Spleen (tissue), 13 donors: ENCODE measurements at regions of chr15 and their contacts with region 1.

Region 1: GRCh38 chr15:43285609-43286037 is 18.9 kb upstream of the TGM5 start:
- DNase-seq: no peak
- H3K4me3 ChIP-seq: no peak overlapping the region
- H3K27ac ChIP-seq: no peak overlapping the region
- H3K4me1 ChIP-seq: peaks cover 0 to 16% (median 3%) of the 10 kb centered on the region in 6 donors
- H3K27me3 ChIP-seq: peaks cover 0 to 8% (median 0%) of the 10 kb centered on the region in 7 donors
- CTCF ChIP-seq: peak; percentile 64 to 96 (median 84)
- POLR2A ChIP-seq: peak in 1 of 3 donors; percentile 8

Region 2: GRCh38 chr15:43225201-43225949 is 60.2 kb before region 1 on chr15:
- intact Hi-C with region 1: loop called (anchors 2 kb)
- DNase-seq: no peak
- H3K4me3 ChIP-seq: no peak overlapping the region
- H3K27ac ChIP-seq: no peak overlapping the region
- H3K4me1 ChIP-seq: peaks cover 0 to 9% (median 0%) of the 10 kb centered on the region in 6 donors
- H3K27me3 ChIP-seq: peaks cover 0 to 6% (median 0%) of the 10 kb centered on the region in 7 donors
- CTCF ChIP-seq: peak; percentile 43 to 83 (median 75)
- POLR2A ChIP-seq: no peak